ENCODE measurements at regions of chr6 and their contacts with region 1.

Region 1: DNA sequence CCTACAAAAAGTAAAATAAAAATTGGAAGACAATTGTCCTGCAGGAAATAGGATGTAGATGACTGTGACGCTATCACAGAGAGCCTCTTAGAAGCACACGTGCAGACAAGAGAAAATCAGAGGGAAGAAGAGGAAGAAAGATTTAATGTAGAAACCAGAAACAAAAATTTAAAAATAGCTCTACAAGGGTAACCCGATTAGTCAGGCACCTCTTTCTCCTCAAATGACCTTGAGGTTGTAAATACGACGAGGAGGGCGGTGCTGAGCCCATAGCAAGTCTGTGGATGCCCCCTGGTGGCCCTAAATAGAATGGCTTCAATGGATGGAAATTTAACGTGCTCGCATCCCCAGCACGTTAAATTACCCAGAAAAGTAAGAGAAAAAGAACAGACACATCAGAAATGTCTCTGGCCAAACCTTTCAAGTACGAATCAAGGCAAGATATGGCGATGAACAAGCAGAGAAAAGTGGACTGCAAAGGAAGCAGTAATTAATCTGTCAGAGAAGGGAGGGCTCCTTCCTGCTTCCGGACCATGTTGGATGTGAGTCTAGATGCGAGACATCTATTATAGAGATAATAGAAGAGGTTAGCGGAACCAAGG is 4.2 kb upstream of the PRPH2 start:
- DNase-seq: peak; percentile 92
- ATAC-seq: peak; percentile 99
- H3K4me3 ChIP-seq: peak overlapping the region; percentile 57 to 76 (median 68)
- H3K4me3 Mint-ChIP-seq: peak overlapping the region; percentile 92
- H3K27ac ChIP-seq: peak overlapping the region; percentile 59 to 64
- H3K27ac Mint-ChIP-seq: peak overlapping the region; percentile 94
- H3K4me1 ChIP-seq: peaks cover 12 to 17% of the 10 kb centered on the region in 2 donors
- H3K4me1 Mint-ChIP-seq: peaks cover 19% of the 10 kb centered on the region
- H3K27me3 ChIP-seq: no peaks in the 10 kb centered on the region
- H3K27me3 Mint-ChIP-seq: no peaks in the 10 kb centered on the region
- CTCF ChIP-seq: peak; percentile 94

Region 2: GRCh38 chr6:42661540-42662153 is 64.9 kb before region 1 on chr6:
- CTCF ChIA-PET with region 1: interaction called, 102 read pairs
- POLR2A ChIA-PET with region 1: interaction called, 5 read pairs
- intact Hi-C with region 1: loop called (anchors 1 kb)
- DNase-seq: peak; percentile 84
- ATAC-seq: peak; percentile 93
- H3K4me3 ChIP-seq: no peak overlapping the region
- H3K4me3 Mint-ChIP-seq: no peak overlapping the region
- H3K27ac ChIP-seq: peak overlapping the region in 1 of 2 donors; percentile 5
- H3K27ac Mint-ChIP-seq: no peak overlapping the region
- H3K4me1 ChIP-seq: no peaks in the 10 kb centered on the region
- H3K4me1 Mint-ChIP-seq: no peaks in the 10 kb centered on the region
- H3K27me3 ChIP-seq: no peaks in the 10 kb centered on the region
- H3K27me3 Mint-ChIP-seq: no peaks in the 10 kb centered on the region
- CTCF ChIP-seq: peak; percentile 91

Region 3: DNA sequence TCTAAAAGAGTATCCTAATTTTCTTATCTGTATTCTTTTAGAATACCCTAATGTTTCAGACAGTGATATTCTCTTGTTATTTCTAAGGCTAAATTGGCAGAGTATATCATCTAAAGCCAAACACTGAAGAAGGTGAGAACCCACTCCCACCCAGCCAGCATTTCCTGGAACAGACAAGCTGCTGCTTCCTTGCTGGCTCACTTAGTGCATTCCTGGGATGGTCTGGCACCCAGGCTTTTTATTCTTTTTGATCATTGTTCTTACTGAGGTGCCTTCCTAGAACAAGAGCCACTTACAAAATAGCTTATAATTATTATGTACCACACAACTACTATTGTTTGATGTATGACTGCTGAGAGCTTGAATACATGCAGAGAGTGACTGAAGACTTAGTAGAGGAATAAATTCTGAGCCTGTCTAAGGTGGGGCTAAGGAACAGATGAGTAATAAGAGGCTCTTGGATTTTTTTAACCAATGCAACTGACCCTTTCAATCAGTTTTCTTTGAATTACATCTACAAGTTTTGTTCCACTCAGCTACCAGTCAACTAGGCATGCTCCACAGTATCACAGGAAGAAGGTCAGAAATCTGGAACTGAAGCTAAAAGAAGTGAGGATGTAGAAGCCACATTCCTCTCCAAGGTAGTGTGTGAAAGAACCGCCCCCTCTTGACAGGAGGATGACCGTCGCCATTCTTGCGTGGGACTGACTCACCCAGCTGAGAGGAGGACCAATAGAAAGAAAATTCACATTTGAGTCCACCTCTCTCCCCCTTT is 34.3 kb before region 1 on chr6:
- CTCF ChIA-PET with region 1: interaction called, 4 read pairs
- POLR2A ChIA-PET with region 1: interaction called, 4 read pairs
- intact Hi-C with region 1: loop called (anchors 2 kb)
- DNase-seq: no peak
- ATAC-seq: no peak
- H3K4me3 ChIP-seq: no peak overlapping the region
- H3K4me3 Mint-ChIP-seq: no peak overlapping the region
- H3K27ac ChIP-seq: no peak overlapping the region
- H3K27ac Mint-ChIP-seq: no peak overlapping the region
- H3K4me1 ChIP-seq: peaks cover 6 to 8% of the 10 kb centered on the region in 2 donors
- H3K4me1 Mint-ChIP-seq: peaks cover 10% of the 10 kb centered on the region
- H3K27me3 ChIP-seq: no peaks in the 10 kb centered on the region
- H3K27me3 Mint-ChIP-seq: no peaks in the 10 kb centered on the region
- CTCF ChIP-seq: no peak

Region 4: GRCh38 chr6:42714098-42714761 is 12.4 kb before region 1 on chr6:
- CTCF ChIA-PET with region 1: interaction called, 10 read pairs
- POLR2A ChIA-PET with region 1: no interaction called
- intact Hi-C with region 1: no loop called
- DNase-seq: no peak
- ATAC-seq: no peak
- H3K4me3 ChIP-seq: no peak overlapping the region
- H3K4me3 Mint-ChIP-seq: no peak overlapping the region
- H3K27ac ChIP-seq: no peak overlapping the region
- H3K27ac Mint-ChIP-seq: no peak overlapping the region
- H3K4me1 ChIP-seq: no peaks in the 10 kb centered on the region
- H3K4me1 Mint-ChIP-seq: no peaks in the 10 kb centered on the region
- H3K27me3 ChIP-seq: peaks cover 0 to 3% (median 0%) of the 10 kb centered on the region in 4 experiments
- H3K27me3 Mint-ChIP-seq: peaks cover 3% of the 10 kb centered on the region
- CTCF ChIP-seq: no peak

Region 5: GRCh38 chr6:42771741-42772100 is 45.1 kb after region 1 on chr6:
- CTCF ChIA-PET with region 1: interaction called, 5 read pairs
- POLR2A ChIA-PET with region 1: interaction called, 4 read pairs
- intact Hi-C with region 1: loop called (anchors 2 kb)
- DNase-seq: peak; percentile 68
- ATAC-seq: no peak
- H3K4me3 ChIP-seq: peak overlapping the region; percentile 30 to 77 (median 49)
- H3K4me3 Mint-ChIP-seq: peak overlapping the region; percentile 87
- H3K27ac ChIP-seq: peak overlapping the region; percentile 90 to 92
- H3K27ac Mint-ChIP-seq: peak overlapping the region; percentile 99
- H3K4me1 ChIP-seq: peaks cover 39 to 52% of the 10 kb centered on the region in 2 donors
- H3K4me1 Mint-ChIP-seq: peaks cover 52% of the 10 kb centered on the region
- H3K27me3 ChIP-seq: no peaks in the 10 kb centered on the region
- H3K27me3 Mint-ChIP-seq: no peaks in the 10 kb centered on the region
- CTCF ChIP-seq: no peak

Region 6: DNA sequence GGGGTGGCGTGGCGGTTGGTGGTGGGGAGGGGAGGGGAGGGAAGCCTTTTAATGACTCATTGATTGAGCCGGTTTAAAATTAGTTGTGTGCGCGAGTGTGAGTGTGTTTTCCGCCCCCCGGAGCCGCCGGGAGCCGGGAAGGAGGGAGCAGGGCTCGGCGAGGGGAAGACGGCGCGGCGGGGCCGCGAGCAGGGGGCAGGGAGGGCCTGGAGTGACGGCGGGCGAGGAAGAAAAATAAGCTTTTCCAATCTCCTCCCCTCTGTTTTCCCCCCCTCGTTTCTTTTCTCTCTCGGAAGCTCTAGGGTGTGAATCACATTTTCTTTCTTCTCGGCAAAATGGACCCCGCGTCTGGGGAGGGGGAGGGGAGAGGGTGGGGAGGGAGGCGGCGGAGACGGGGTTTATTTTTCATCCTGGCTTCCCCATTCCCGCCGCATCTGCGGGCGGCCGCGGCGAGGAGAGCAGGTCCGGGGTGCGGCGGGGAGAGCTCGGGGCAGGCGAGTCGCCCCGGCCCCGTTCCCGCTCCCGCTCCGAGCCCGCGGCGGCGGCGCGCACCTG is 56.1 kb after region 1 on chr6:
- CTCF ChIA-PET with region 1: interaction called, 25 read pairs
- POLR2A ChIA-PET with region 1: interaction called, 40 read pairs
- intact Hi-C with region 1: loop called (anchors 2 kb)
- DNase-seq: peak; percentile 88
- ATAC-seq: peak; percentile 48
- H3K4me3 ChIP-seq: peak overlapping the region; percentile 55 to 99 (median 96)
- H3K4me3 Mint-ChIP-seq: peak overlapping the region; percentile 93
- H3K27ac ChIP-seq: peak overlapping the region; percentile 99 to 100
- H3K27ac Mint-ChIP-seq: peak overlapping the region; percentile 100
- H3K4me1 ChIP-seq: peaks cover 54 to 57% of the 10 kb centered on the region in 2 donors
- H3K4me1 Mint-ChIP-seq: peaks cover 41% of the 10 kb centered on the region
- H3K27me3 ChIP-seq: no peaks in the 10 kb centered on the region
- H3K27me3 Mint-ChIP-seq: no peaks in the 10 kb centered on the region
- CTCF ChIP-seq: no peak

Region 7: GRCh38 chr6:42901536-42901957 is 175.0 kb after region 1 on chr6:
- CTCF ChIA-PET with region 1: interaction called, 3 read pairs
- POLR2A ChIA-PET with region 1: no interaction called
- intact Hi-C with region 1: loop called (anchors 1 kb)
- DNase-seq: peak; percentile 88
- ATAC-seq: peak; percentile 99
- H3K4me3 ChIP-seq: no peak overlapping the region
- H3K4me3 Mint-ChIP-seq: no peak overlapping the region
- H3K27ac ChIP-seq: no peak overlapping the region
- H3K27ac Mint-ChIP-seq: no peak overlapping the region
- H3K4me1 ChIP-seq: peaks cover 5 to 8% of the 10 kb centered on the region in 2 donors
- H3K4me1 Mint-ChIP-seq: peaks cover 10% of the 10 kb centered on the region
- H3K27me3 ChIP-seq: no peaks in the 10 kb centered on the region
- H3K27me3 Mint-ChIP-seq: no peaks in the 10 kb centered on the region
- CTCF ChIP-seq: peak; percentile 93